K562 (cell line): ENCODE measurements at regions of chr17 and their contacts with region 1.

Region 1: GRCh38 chr17:33949100-33949499 is 306.0 kb upstream of the CCL2 start:
- DNase-seq: peak; percentile 58 to 81 (median 69)
- ATAC-seq: peak; percentile 99
- H3K4me3 ChIP-seq: no peak overlapping the region
- H3K27ac ChIP-seq: no peak overlapping the region
- H3K4me1 ChIP-seq: peaks cover 11 to 30% of the 10 kb centered on the region in 2 experiments; a peak in 4 of 5 replicates
- H3K27me3 ChIP-seq: peaks cover 0 to 2% of the 10 kb centered on the region in 2 experiments; a peak in 1 of 5 replicates
- CTCF ChIP-seq: peak; percentile 85 to 89 (median 88)
- EP300 ChIP-seq: no peak
- POLR2A ChIP-seq: no peak
- RAD21 ChIP-seq: peak; percentile 82 to 95

Region 2: GRCh38 chr17:33712120-33712519 is 237.0 kb before region 1 on chr17:
- CTCF ChIA-PET with region 1: no interaction called
- POLR2A ChIA-PET with region 1: no interaction called
- in situ Hi-C with region 1: no loop called
- intact Hi-C with region 1: no loop called
- DNase-seq: peak in 2 of 4 experiments; percentile 6 to 12
- ATAC-seq: peak; percentile 47; the same call in 1 of the 3 replicates
- H3K4me3 ChIP-seq: no peak overlapping the region
- H3K27ac ChIP-seq: no peak overlapping the region
- H3K4me1 ChIP-seq: no peaks in the 10 kb centered on the region
- H3K27me3 ChIP-seq: peaks cover 0 to 2% of the 10 kb centered on the region in 2 experiments; a peak in 1 of 5 replicates
- CTCF ChIP-seq: peak; percentile 16 to 36 (median 28); a peak in 2 of 6 replicates
- EP300 ChIP-seq: no peak
- POLR2A ChIP-seq: no peak
- RAD21 ChIP-seq: no peak

Region 3: DNA sequence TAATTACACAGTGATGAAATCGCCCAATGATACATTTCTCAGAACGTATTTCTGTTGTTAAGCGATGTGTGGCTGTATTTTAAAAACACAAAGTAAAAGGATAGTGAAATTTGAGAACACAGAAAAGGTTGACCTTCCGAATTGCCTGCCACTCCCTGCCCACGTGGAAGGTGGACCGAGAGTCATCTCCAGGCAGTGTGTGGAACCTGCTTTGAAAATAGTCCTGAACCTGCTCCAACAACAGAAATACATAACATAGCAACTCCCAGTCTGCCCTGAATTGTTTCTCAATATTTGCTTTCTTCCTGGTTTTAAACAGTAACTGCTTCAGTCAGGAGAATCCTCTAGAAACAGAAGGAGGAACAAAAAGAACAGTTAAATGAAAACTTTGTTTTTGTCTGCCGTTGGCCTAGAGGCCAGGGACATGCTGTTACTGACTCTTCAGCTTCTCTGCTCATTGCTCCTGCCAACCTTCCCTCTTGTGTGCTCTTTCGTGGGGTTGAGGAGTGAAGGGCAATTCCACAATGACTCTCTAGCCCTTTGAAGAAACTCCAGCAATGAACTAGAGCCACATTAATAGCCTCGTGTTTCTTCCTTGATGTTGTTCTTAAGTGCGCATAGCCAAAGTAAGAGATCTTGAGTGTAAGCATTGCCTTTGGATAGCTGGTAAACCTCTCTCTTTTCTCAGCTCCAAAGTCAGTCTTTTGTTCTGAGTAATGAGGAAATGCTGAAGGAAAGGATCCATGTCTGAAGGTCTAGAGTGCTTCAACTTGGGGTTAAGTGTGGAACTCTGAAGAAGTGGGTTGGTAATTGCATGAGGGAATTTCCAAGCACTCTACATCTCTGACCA is 146.5 kb before region 1 on chr17:
- CTCF ChIA-PET with region 1: no interaction called
- POLR2A ChIA-PET with region 1: no interaction called
- in situ Hi-C with region 1: no loop called
- intact Hi-C with region 1: no loop called
- DNase-seq: no peak
- ATAC-seq: no peak
- H3K4me3 ChIP-seq: no peak overlapping the region
- H3K27ac ChIP-seq: no peak overlapping the region
- H3K4me1 ChIP-seq: no peaks in the 10 kb centered on the region; a peak in 1 of 5 replicates
- H3K27me3 ChIP-seq: peaks cover 12 to 17% of the 10 kb centered on the region in 2 experiments; a peak in 4 of 5 replicates
- CTCF ChIP-seq: no peak
- EP300 ChIP-seq: no peak
- POLR2A ChIP-seq: no peak
- RAD21 ChIP-seq: no peak

Region 4: GRCh38 chr17:33854596-33854995 is 94.5 kb before region 1 on chr17:
- CTCF ChIA-PET with region 1: interaction called, 3 read pairs
- POLR2A ChIA-PET with region 1: interaction called, 3 read pairs
- in situ Hi-C with region 1: no loop called
- intact Hi-C with region 1: loop called (anchors 1 kb)
- DNase-seq: no peak
- ATAC-seq: no peak
- H3K4me3 ChIP-seq: no peak overlapping the region
- H3K27ac ChIP-seq: no peak overlapping the region
- H3K4me1 ChIP-seq: peaks cover 0 to 13% of the 10 kb centered on the region in 2 experiments; a peak in 3 of 5 replicates
- H3K27me3 ChIP-seq: peaks cover 7 to 9% of the 10 kb centered on the region in 2 experiments; a peak in 3 of 5 replicates
- CTCF ChIP-seq: no peak
- EP300 ChIP-seq: no peak
- POLR2A ChIP-seq: no peak
- RAD21 ChIP-seq: no peak

Region 5: DNA sequence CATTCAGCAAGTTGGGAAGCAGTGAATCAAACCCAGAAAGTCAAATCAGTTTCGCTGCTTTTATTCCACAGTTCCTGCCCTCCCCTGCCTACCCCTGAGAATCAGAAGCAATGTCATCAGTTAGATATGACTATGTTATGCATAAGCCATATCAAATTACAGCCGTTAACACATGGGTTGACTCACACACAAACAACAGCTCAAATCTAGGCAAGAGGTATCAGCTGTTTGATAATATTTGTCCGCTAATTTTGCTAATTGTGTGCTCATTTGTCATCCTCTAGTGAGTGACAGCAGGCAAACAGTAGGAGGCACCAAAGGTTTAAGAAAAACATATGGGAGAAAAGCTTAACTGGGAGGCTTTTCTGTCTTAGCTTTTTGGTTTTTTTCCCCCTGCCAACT is 21.4 kb before region 1 on chr17:
- CTCF ChIA-PET with region 1: no interaction called
- POLR2A ChIA-PET with region 1: interaction called, 4 read pairs
- in situ Hi-C with region 1: no loop called
- intact Hi-C with region 1: loop called (anchors 1 kb)
- DNase-seq: peak; percentile 47 to 57 (median 52)
- ATAC-seq: peak; percentile 41; the same call in 2 of the 3 replicates
- H3K4me3 ChIP-seq: no peak overlapping the region
- H3K27ac ChIP-seq: no peak overlapping the region; the same call in 2 of the 3 replicates
- H3K4me1 ChIP-seq: peaks cover 29 to 83% of the 10 kb centered on the region in 2 experiments; a peak in 4 of 5 replicates
- H3K27me3 ChIP-seq: no peaks in the 10 kb centered on the region
- CTCF ChIP-seq: peak; percentile 42 to 85 (median 73); a peak in 5 of 6 replicates
- EP300 ChIP-seq: no peak
- POLR2A ChIP-seq: no peak
- RAD21 ChIP-seq: peak; percentile 76 to 81